K562 (cell line): ENCODE measurements at regions of chr5 and their contacts with region 1.

Region 1: GRCh38 chr5:78527054-78527859 is 121.3 kb downstream of the LHFPL2 start:
- DNase-seq: peak; percentile 39 to 82 (median 58)
- ATAC-seq: peak; percentile 84
- H3K4me3 ChIP-seq: no peak overlapping the region
- H3K27ac ChIP-seq: peak overlapping the region; percentile 53
- H3K4me1 ChIP-seq: peaks cover 20 to 53% of the 10 kb centered on the region in 2 experiments
- H3K27me3 ChIP-seq: no peaks in the 10 kb centered on the region
- CTCF ChIP-seq: no peak
- EP300 ChIP-seq: peak; percentile 72
- POLR2A ChIP-seq: no peak
- RAD21 ChIP-seq: no peak

Region 2: DNA sequence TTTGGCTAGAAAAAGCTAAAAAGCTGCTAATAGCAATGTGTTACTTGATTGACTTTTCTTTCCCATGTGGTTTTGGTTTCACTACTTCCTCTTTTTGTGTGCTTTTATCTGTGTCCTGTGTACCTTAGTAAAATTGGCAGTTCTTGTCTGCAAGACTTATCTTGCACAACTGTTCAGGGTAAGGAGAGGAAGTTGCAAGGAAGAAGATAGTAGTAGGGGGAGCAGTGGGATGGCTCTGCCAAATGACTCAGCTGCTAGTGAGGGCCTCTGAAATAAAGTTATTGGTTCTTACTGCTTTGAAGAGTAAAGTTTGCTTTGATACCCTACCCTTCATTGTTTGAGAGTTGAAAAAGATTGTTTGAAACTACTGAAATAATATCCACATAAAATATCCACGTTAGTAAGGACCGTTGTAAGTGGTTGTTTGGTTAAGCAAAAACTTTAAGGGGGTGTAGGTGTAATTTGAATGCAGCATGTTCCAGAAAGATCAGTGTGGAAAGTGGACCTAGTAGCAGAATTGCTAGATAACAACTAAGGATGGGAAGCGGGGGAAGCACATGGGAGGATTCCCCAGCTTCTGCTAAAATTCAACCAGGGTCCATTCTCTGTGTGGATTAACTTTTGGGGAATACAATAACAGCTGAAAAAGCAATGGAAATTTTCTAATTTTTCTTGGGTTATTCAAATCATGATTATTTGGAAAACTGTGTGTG is 43.3 kb before region 1 on chr5:
- CTCF ChIA-PET with region 1: no interaction called
- POLR2A ChIA-PET with region 1: no interaction called
- in situ Hi-C with region 1: loop called (anchors 5 kb)
- intact Hi-C with region 1: loop called (anchors 2 kb)
- DNase-seq: peak; percentile 22 to 91 (median 61)
- ATAC-seq: peak; percentile 98
- H3K4me3 ChIP-seq: no peak overlapping the region
- H3K27ac ChIP-seq: peak overlapping the region; percentile 74
- H3K4me1 ChIP-seq: peaks cover 8 to 48% of the 10 kb centered on the region in 2 experiments
- H3K27me3 ChIP-seq: no peaks in the 10 kb centered on the region
- CTCF ChIP-seq: no peak
- EP300 ChIP-seq: peak; percentile 97
- POLR2A ChIP-seq: no peak
- RAD21 ChIP-seq: no peak; a peak in 2 of 4 replicates

Region 3: GRCh38 chr5:78566747-78567425 is 39.6 kb after region 1 on chr5:
- CTCF ChIA-PET with region 1: no interaction called
- POLR2A ChIA-PET with region 1: no interaction called
- in situ Hi-C with region 1: no loop called
- intact Hi-C with region 1: no loop called
- DNase-seq: no peak
- ATAC-seq: no peak
- H3K4me3 ChIP-seq: no peak overlapping the region
- H3K27ac ChIP-seq: no peak overlapping the region
- H3K4me1 ChIP-seq: peaks cover 0 to 10% of the 10 kb centered on the region in 2 experiments; a peak in 2 of 5 replicates
- H3K27me3 ChIP-seq: no peaks in the 10 kb centered on the region
- CTCF ChIP-seq: no peak
- EP300 ChIP-seq: no peak
- POLR2A ChIP-seq: no peak
- RAD21 ChIP-seq: no peak